ENCODE measurements at regions of chr1 and their contacts with region 1.

Region 1: DNA sequence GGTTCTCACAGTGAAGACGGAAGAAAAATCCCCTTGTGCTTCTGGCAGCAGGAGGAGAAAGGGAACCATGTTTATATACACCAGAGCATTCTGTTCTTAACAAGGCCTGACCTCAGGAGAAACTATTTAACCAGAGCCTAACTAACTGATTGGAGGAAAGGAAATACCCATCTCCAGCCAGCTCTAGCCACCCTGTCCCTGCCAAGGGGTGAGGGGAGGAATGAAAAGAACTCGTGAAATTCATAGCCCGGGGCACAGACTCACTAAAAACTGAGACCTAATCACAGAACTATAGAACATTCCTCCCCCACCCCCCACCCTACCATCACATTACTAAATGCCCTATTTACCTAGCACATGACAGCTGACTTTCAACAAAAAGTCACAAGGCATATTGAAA is 65.0 kb downstream of the KCNH1 start:
- DNase-seq: no peak
- H3K4me3 ChIP-seq: no peak overlapping the region
- H3K27ac ChIP-seq: no peak overlapping the region
- H3K4me1 ChIP-seq: no peaks in the 10 kb centered on the region
- H3K27me3 ChIP-seq: peaks cover 41% of the 10 kb centered on the region
- CTCF ChIP-seq: no peak

Region 2: GRCh38 chr1:210222340-210223006 is 846.5 kb before region 1 on chr1:
- CTCF ChIA-PET with region 1: no interaction called
- POLR2A ChIA-PET with region 1: interaction called, 10 read pairs
- intact Hi-C with region 1: no loop called
- DNase-seq: peak; percentile 65 to 78
- H3K4me3 ChIP-seq: no peak overlapping the region
- H3K27ac ChIP-seq: no peak overlapping the region
- H3K4me1 ChIP-seq: peaks cover 8% of the 10 kb centered on the region; the same call in 1 of the 2 replicates
- H3K27me3 ChIP-seq: no peaks in the 10 kb centered on the region
- CTCF ChIP-seq: no peak

Region 3: GRCh38 chr1:211017075-211017748 is 51.8 kb before region 1 on chr1:
- CTCF ChIA-PET with region 1: no interaction called
- POLR2A ChIA-PET with region 1: no interaction called
- intact Hi-C with region 1: no loop called
- DNase-seq: no peak
- H3K4me3 ChIP-seq: no peak overlapping the region
- H3K27ac ChIP-seq: no peak overlapping the region
- H3K4me1 ChIP-seq: no peaks in the 10 kb centered on the region
- H3K27me3 ChIP-seq: peaks cover 15% of the 10 kb centered on the region
- CTCF ChIP-seq: no peak